Panc1 (cell line): ENCODE measurements at regions of chr11 and their contacts with region 1.

Region 1: GRCh38 chr11:119101759-119102423 is at the start of gene DPAGT1:
- DNase-seq: peak; percentile 94
- ATAC-seq: peak; percentile 92
- H3K4me3 ChIP-seq: peak within 1 kb of the TSS; percentile 87 to 90
- H3K27ac ChIP-seq: peak within 1 kb of the TSS; percentile 99
- H3K4me1 ChIP-seq: peaks cover 21% of the 10 kb centered on the region
- H3K27me3 ChIP-seq: no peaks in the 10 kb centered on the region
- CTCF ChIP-seq: no peak
- total RNA-seq, gene DPAGT1: 72.1 TPM

Region 2: GRCh38 chr11:118649941-118650340 is 451.9 kb before region 1 on chr11:
- CTCF ChIA-PET with region 1: no interaction called
- POLR2A ChIA-PET with region 1: no interaction called
- in situ Hi-C with region 1: no loop called
- intact Hi-C with region 1: no loop called
- DNase-seq: no peak
- ATAC-seq: no peak
- H3K4me3 ChIP-seq: no peak overlapping the region
- H3K27ac ChIP-seq: no peak overlapping the region
- H3K4me1 ChIP-seq: no peaks in the 10 kb centered on the region
- H3K27me3 ChIP-seq: no peaks in the 10 kb centered on the region
- CTCF ChIP-seq: no peak

Region 3: GRCh38 chr11:119018074-119018938 is 83.6 kb before region 1 on chr11 and contains the starts of genes RPS25 and TRAPPC4:
- CTCF ChIA-PET with region 1: no interaction called
- POLR2A ChIA-PET with region 1: interaction called, 12 read pairs
- in situ Hi-C with region 1: no loop called
- intact Hi-C with region 1: no loop called
- DNase-seq: peak; percentile 95
- ATAC-seq: peak; percentile 93
- H3K4me3 ChIP-seq: peak within 1 kb of the TSS; percentile 67 to 85
- H3K27ac ChIP-seq: peak within 1 kb of the TSS; percentile 99
- H3K4me1 ChIP-seq: peaks cover 31% of the 10 kb centered on the region
- H3K27me3 ChIP-seq: no peaks in the 10 kb centered on the region
- CTCF ChIP-seq: no peak
- total RNA-seq, gene RPS25: 1,083 TPM
- total RNA-seq, gene TRAPPC4: 78.9 TPM

Region 4: GRCh38 chr11:119130662-119131061 is 28.8 kb after region 1 on chr11:
- CTCF ChIA-PET with region 1: interaction called, 3 read pairs
- POLR2A ChIA-PET with region 1: interaction called, 11 read pairs
- in situ Hi-C with region 1: no loop called
- intact Hi-C with region 1: no loop called
- DNase-seq: no peak
- ATAC-seq: no peak
- H3K4me3 ChIP-seq: no peak overlapping the region
- H3K27ac ChIP-seq: no peak overlapping the region
- H3K4me1 ChIP-seq: no peaks in the 10 kb centered on the region
- H3K27me3 ChIP-seq: no peaks in the 10 kb centered on the region
- CTCF ChIP-seq: no peak

Region 5: DNA sequence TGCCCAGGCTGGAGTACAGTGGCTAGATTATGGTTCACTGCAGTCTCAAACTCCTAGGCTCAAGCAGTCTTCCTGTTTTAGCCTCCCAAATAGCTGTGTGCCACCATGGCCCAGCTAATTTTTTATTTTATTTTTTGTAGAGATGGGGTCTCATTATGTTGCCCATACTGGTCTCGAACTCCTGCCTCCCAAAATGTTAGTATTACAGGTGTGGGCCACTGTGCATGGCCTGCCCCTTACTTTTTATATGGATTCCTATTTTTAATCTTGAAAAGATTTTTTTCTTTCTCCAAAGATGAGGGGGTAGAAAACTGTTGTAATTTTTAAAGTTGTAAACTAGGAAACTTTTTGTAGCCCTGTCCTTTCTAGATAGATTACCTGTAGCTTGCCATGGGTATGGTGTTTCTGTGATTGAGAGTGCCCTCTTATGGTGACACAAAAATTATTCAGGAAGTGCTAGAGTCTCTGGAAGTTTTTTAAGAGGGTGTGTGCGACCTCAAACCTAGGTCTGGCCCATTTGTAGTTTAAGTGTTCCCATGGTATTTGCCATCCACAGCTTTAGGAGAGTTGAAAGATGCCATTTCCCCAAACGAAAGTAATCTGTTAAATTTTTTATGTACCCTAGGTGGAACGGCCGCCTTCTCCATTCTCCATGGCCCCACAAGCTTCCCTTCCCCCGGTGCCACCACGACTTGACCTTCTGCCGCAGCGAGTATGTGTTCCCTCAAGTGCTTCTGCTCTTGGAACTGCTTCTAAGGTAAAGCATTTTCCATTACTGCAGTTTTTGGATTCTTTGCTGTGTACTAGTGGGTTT is 182.7 kb after region 1 on chr11:
- CTCF ChIA-PET with region 1: interaction called, 3 read pairs
- POLR2A ChIA-PET with region 1: interaction called, 13 read pairs
- in situ Hi-C with region 1: no loop called
- intact Hi-C with region 1: no loop called
- DNase-seq: peak; percentile 33
- ATAC-seq: peak; percentile 92
- H3K4me3 ChIP-seq: no peak overlapping the region
- H3K27ac ChIP-seq: no peak overlapping the region
- H3K4me1 ChIP-seq: no peaks in the 10 kb centered on the region
- H3K27me3 ChIP-seq: no peaks in the 10 kb centered on the region
- CTCF ChIP-seq: peak; percentile 77